ENCODE measurements at regions of chr1 and their contacts with region 1.

Region 1: GRCh38 chr1:156608036-156608674 is 6.9 kb upstream of the GPATCH4 start:
- DNase-seq: peak in 1 of 2 experiments; percentile 52
- H3K4me3 ChIP-seq: no peak overlapping the region
- H3K27ac ChIP-seq: no peak overlapping the region
- H3K4me1 ChIP-seq: no peaks in the 10 kb centered on the region
- H3K27me3 ChIP-seq: no peaks in the 10 kb centered on the region
- CTCF ChIP-seq: peak; percentile 26 to 90 (median 90)
- EP300 ChIP-seq: no peak
- POLR2A ChIP-seq: no peak
- RAD21 ChIP-seq: peak; percentile 70 to 80

Region 2: DNA sequence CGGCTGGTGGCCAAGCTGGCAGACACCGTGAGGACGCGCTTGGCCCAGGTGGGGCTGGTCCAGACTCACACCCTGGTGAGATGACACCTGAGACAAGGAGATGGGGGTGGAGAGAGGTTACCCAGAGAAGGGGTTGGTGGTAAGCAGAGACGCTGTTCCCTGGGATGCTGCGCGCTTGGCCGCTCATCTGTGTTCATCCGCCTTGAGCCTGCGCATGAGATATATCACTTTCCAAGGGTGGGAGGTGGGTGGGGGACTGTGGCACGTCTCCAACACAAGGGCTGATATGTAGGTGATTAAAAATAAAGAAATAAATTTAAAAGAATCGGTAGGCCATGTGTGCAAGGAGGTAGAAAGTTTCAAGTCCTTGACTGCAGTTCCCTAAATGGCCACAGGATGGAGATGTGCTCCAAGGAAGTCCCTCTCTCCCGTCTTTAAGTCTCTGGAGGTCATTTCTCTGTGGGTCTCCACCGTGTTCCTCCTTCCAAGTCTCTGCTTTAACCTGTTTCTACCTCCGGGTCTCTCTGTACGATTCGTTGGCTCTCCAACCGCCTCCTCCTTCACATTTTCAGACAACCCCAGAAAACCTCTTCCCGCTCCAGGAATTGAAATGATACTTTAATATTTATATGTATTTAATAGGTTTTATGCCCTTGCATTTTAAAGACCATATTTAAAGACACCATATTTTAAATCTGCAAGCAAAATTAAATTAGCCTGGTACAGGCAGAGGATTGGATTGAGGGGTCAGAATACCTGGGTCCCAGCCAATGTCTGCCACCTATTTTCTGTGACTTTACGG is 24.1 kb before region 1 on chr1:
- CTCF ChIA-PET with region 1: interaction called, 55 read pairs
- POLR2A ChIA-PET with region 1: interaction called, 4 read pairs
- DNase-seq: peak in 1 of 2 experiments; percentile 88
- H3K4me3 ChIP-seq: peak overlapping the region in 1 of 4 experiments; percentile 42; a peak in 3 of 8 replicates
- H3K27ac ChIP-seq: no peak overlapping the region
- H3K4me1 ChIP-seq: peaks cover 0 to 10% (median 3%) of the 10 kb centered on the region in 4 experiments; a peak in 5 of 7 replicates
- H3K27me3 ChIP-seq: no peaks in the 10 kb centered on the region
- CTCF ChIP-seq: peak; percentile 50 to 87 (median 85)
- EP300 ChIP-seq: no peak
- POLR2A ChIP-seq: no peak
- RAD21 ChIP-seq: peak; percentile 81 to 86

Region 3: DNA sequence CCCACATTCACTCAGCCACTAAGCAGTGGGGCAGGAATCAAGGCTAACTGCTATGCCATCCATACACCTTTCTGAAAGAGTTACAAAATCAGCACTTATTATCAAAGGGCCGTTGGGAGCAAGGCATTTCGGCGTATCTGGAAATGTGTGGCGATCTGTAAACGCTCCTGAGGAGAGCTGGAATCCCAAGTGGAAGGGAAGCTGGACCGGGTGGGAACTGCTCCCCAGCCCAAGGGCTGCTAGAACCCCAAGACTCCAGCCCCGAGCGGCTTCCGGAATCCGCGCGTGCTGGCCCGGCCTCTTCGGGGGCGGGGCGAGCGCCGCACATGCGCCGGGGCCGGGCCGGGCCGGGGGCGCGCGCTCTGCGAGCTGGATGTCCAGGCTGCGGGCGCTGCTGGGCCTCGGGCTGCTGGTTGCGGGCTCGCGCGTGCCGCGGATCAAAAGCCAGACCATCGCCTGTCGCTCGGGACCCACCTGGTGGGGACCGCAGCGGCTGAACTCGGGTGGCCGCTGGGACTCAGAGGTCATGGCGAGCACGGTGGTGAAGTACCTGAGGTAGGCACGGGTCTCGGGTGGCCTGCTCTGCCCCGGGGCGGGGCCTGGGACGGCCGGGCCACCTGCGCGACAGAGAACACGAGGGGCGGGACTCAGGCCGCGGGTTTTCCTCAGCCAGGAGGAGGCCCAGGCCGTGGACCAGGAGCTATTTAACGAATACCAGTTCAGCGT is 16.6 kb before region 1 on chr1 and contains the start of gene NAXE:
- CTCF ChIA-PET with region 1: interaction called, 45 read pairs
- POLR2A ChIA-PET with region 1: interaction called, 66 read pairs
- DNase-seq: peak in 1 of 2 experiments; percentile 80
- H3K4me3 ChIP-seq: peak within 1 kb of the TSS; percentile 62 to 87 (median 81)
- H3K27ac ChIP-seq: peak within 1 kb of the TSS; percentile 26; the same call in 1 of the 2 replicates
- H3K4me1 ChIP-seq: peaks cover 0 to 10% (median 2%) of the 10 kb centered on the region in 4 experiments; a peak in 4 of 7 replicates
- H3K27me3 ChIP-seq: no peaks in the 10 kb centered on the region
- CTCF ChIP-seq: no peak
- EP300 ChIP-seq: no peak
- POLR2A ChIP-seq: peak; percentile 64; a peak in 2 of 3 replicates
- RAD21 ChIP-seq: no peak
- total RNA-seq, gene NAXE: 73.1 and 75.4 TPM in 2 replicates

Region 4: GRCh38 chr1:156618853-156619581 is 10.9 kb after region 1 on chr1 and contains the start of gene HAPLN2:
- CTCF ChIA-PET with region 1: interaction called, 80 read pairs
- POLR2A ChIA-PET with region 1: interaction called, 4 read pairs
- DNase-seq: peak in 1 of 2 experiments; percentile 84
- H3K4me3 ChIP-seq: peak within 1 kb of the TSS in 1 of 4 experiments; percentile 32; a peak in 2 of 8 replicates
- H3K27ac ChIP-seq: no peak within 1 kb of the TSS
- H3K4me1 ChIP-seq: no peaks in the 10 kb centered on the region; a peak in 2 of 7 replicates
- H3K27me3 ChIP-seq: peaks cover 14 to 34% (median 27%) of the 10 kb centered on the region in 4 experiments
- CTCF ChIP-seq: peak; percentile 72 to 94 (median 92)
- EP300 ChIP-seq: no peak
- POLR2A ChIP-seq: no peak
- RAD21 ChIP-seq: peak; percentile 44 to 53
- total RNA-seq, gene HAPLN2: 0.19 TPM in 1 of 2 replicates, not detected in the other

Region 5: DNA sequence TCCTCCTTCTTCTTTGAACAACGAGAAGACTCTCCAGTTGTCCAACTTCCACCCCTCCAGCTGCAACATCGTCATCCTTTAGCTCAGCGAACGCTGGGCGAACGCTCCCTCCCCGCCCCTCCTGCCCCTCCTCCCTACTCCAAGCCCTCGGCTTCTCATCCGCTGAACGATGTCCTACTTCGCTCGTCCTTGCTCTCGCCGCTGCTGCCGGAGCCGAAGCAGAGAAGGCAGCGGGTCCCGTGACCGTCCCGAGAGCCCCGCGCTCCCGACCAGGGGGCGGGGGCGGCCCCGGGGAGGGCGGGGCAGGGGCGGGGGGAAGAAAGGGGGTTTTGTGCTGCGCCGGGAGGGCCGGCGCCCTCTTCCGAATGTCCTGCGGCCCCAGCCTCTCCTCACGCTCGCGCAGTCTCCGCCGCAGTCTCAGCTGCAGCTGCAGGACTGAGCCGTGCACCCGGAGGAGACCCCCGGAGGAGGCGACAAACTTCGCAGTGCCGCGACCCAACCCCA is 33.7 kb after region 1 on chr1 and contains the start of gene BCAN:
- CTCF ChIA-PET with region 1: interaction called, 24 read pairs
- POLR2A ChIA-PET with region 1: no interaction called
- DNase-seq: peak in 1 of 2 experiments; percentile 80
- H3K4me3 ChIP-seq: peak within 1 kb of the TSS; percentile 26 to 72 (median 53)
- H3K27ac ChIP-seq: no peak within 1 kb of the TSS
- H3K4me1 ChIP-seq: peaks cover 5 to 22% (median 15%) of the 10 kb centered on the region in 4 experiments
- H3K27me3 ChIP-seq: peaks cover 11 to 83% (median 63%) of the 10 kb centered on the region in 4 experiments
- CTCF ChIP-seq: no peak
- EP300 ChIP-seq: no peak
- POLR2A ChIP-seq: no peak
- RAD21 ChIP-seq: no peak
- total RNA-seq, gene BCAN: 3.8 and 4.5 TPM in 2 replicates

Region 6: DNA sequence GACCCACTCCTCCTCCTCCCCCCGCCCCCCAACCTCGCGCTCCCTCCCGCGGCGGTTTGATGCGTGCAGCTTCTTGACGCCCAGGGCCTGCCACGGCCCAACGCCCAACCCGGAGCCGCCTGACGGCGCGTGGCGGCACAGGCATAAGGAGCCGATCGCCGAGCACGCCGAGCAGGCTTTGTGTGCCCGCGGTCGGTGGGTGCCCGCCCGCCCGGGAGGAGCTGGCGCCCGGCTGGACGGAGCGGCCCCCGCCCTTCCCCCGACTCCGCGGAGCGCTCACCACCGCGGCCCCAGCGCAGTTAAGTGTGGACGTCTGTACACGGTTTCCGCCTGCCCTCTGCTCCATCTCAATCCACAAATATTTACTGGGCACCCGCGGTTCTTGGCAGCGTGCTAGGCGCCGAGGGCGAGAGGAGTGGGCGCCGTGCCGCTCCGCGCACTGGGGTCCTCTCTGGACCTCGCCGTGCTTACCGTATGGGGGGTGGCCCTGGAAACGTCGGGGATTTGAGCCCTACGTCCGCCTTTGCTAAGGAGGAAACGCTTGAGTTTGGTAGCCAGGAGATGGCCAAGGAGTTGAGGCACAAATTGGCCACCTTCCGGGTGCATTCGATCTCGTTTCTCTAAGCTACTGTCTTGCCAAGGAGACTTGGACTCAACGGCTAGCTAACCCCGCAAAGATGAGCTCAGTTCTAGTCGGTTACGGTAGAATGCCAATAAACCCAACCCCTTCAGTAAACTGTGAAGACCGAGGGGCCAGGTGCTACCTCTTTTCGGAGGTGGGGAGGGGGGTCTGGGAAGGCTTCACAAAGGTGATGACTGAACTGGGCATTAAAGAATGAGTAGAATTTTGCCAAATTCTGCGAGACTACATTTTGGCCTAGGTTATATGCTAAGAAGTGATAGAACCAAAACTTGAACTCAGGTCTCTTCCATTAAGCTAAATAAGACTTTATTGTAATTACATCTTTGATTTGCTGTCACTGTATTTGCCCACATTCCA is 143.9 kb after region 1 on chr1:
- CTCF ChIA-PET with region 1: no interaction called
- POLR2A ChIA-PET with region 1: no interaction called
- DNase-seq: peak; percentile 91 to 93
- H3K4me3 ChIP-seq: peak overlapping the region; percentile 86 to 100 (median 95)
- H3K27ac ChIP-seq: peak overlapping the region; percentile 85
- H3K4me1 ChIP-seq: peaks cover 24 to 36% (median 27%) of the 10 kb centered on the region in 4 experiments
- H3K27me3 ChIP-seq: no peaks in the 10 kb centered on the region
- CTCF ChIP-seq: no peak; a peak in 1 of 4 replicates
- EP300 ChIP-seq: peak in 1 of 2 experiments; percentile 84; a peak in 1 of 3 replicates
- POLR2A ChIP-seq: peak; percentile 65 to 79; a peak in 2 of 3 replicates
- RAD21 ChIP-seq: no peak